Activated naive CD4-positive, alpha-beta T cell treated with anti-CD3 and anti-CD28 coated beads for 36 hours (primary cell): ENCODE measurements at regions of chr19 and their contacts with region 1.

Region 1: GRCh38 chr19:16197622-16198369 is at the start of gene AP1M1:
- DNase-seq: peak; percentile 99
- H3K4me3 Mint-ChIP-seq: peak within 1 kb of the TSS; percentile 93
- H3K27ac Mint-ChIP-seq: peak within 1 kb of the TSS; percentile 93
- H3K4me1 Mint-ChIP-seq: peaks cover 37% of the 10 kb centered on the region
- H3K27me3 Mint-ChIP-seq: no peaks in the 10 kb centered on the region
- total RNA-seq, gene AP1M1: 113 to 123 TPM

Region 2: DNA sequence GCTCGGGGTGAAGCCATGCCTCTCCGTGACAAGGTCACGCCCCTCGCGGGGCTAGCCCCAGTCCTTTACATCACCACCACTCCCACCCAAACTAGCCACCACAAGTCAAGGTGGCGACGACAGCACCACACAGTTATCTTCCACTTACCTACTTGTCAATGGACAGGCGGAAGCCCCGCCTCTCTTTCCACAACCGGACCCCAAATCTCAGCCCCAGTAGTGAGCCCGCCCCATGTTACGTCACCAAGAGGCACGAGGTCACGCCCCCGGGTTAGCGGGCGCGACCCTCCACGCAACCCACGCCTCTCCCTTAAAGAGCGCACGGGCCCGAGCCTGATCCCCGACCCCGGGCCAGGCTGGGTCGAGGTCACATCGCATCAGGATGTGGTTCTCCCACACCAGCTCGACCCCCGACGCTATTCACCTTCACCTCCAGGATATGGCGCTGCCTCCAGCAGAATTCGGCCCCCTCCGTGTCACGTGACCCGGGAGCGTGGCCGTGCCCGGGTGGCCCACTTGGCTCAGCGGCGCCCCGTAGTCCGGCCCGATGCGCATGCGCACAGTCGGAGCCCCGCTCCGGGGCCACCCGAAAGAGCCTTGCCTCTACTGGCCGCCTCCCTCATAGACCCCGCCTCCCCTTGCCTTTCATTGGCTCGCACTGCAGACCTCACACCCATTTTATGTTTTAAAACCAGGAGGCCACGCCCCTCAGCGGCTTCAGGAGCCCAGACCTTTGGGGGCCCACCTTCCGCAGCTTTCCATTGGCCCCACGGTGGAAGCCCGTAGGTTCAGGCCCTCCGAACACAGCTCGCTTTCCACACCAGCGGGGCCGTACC is 1072.3 kb before region 1 on chr19:
- CTCF ChIA-PET with region 1: no interaction called
- intact Hi-C with region 1: loop called (anchors 2 kb)
- DNase-seq: peak; percentile 99
- H3K4me3 Mint-ChIP-seq: peak overlapping the region; percentile 88
- H3K27ac Mint-ChIP-seq: peak overlapping the region; percentile 94
- H3K4me1 Mint-ChIP-seq: peaks cover 31% of the 10 kb centered on the region
- H3K27me3 Mint-ChIP-seq: no peaks in the 10 kb centered on the region

Region 3: DNA sequence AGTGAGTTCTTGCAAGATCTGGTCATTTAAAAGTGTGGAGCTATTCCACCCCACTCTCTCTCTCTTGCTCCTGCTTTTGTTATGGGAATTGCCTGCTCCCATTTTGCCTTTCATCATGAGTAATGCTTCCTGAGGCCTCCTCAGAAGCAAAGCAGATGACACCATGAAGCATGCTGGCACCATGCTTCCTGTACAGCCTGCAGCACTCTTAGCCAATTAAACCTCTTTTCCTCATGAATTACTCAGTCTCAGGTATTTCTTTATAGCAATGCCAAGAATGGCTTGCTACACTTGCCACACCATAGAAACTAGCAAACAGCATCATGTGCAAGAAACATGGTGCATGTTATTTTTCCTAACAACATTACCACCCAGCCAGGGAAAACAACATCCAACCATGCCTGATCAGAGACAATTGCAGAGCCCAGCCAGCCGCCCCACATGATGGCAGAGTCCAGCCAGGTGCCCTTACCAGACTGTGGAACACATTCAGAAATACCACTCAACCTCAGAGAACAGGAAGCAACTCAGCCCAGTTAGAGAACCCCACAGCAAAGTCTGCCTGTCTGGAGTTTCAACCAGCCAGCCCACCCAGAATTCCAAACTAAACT is 1053.7 kb before region 1 on chr19:
- CTCF ChIA-PET with region 1: no interaction called
- intact Hi-C with region 1: no loop called
- DNase-seq: no peak
- H3K4me3 Mint-ChIP-seq: no peak overlapping the region
- H3K27ac Mint-ChIP-seq: peak overlapping the region; percentile 4
- H3K4me1 Mint-ChIP-seq: peaks cover 7% of the 10 kb centered on the region
- H3K27me3 Mint-ChIP-seq: no peaks in the 10 kb centered on the region

Region 4: GRCh38 chr19:15935175-15935702 is 262.6 kb before region 1 on chr19:
- CTCF ChIA-PET with region 1: no interaction called
- intact Hi-C with region 1: no loop called
- DNase-seq: no peak
- H3K4me3 Mint-ChIP-seq: no peak overlapping the region
- H3K27ac Mint-ChIP-seq: no peak overlapping the region
- H3K4me1 Mint-ChIP-seq: no peaks in the 10 kb centered on the region
- H3K27me3 Mint-ChIP-seq: peaks cover 37% of the 10 kb centered on the region

Region 5: GRCh38 chr19:16160943-16161560 is 36.7 kb before region 1 on chr19:
- CTCF ChIA-PET with region 1: no interaction called
- intact Hi-C with region 1: no loop called
- DNase-seq: peak; percentile 52
- H3K4me3 Mint-ChIP-seq: no peak overlapping the region
- H3K27ac Mint-ChIP-seq: no peak overlapping the region
- H3K4me1 Mint-ChIP-seq: peaks cover 17% of the 10 kb centered on the region
- H3K27me3 Mint-ChIP-seq: no peaks in the 10 kb centered on the region

Region 6: DNA sequence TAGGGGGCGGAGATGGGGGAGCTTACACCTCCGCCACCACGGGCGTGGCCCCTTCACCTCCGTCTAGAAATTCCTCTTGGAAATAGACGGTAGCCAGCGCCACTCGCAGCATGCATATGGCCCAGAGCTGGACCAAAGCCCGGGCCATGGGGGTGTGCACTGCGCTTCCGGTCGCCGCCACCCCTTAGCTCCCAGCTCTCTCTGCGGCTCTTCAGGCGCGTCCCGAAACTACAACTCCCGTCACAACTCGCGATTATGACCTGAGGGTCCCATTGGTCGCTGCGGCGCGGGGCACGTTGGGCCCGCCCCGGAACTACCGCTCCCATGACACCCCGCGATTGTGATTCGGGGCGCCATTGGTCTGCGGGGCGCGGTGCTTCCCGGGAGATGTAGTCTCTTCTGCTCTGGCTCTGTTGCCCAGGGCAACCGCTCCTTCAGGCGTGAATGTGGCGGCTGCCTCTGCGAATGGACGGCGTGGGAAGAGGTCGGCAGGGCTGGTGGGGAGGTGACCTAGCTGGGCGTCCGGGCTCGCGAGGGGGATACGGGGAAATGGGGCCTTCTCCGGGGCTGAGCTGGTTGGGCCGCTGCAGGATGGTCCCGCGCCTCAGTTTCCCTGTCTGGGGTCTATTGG is 298.3 kb after region 1 on chr19 and contains the starts of genes C19orf44 and CALR3:
- CTCF ChIA-PET with region 1: no interaction called
- intact Hi-C with region 1: loop called (anchors 5 kb)
- DNase-seq: peak; percentile 98
- H3K4me3 Mint-ChIP-seq: peak within 1 kb of the TSS; percentile 95
- H3K27ac Mint-ChIP-seq: peak within 1 kb of the TSS; percentile 64
- H3K4me1 Mint-ChIP-seq: peaks cover 15% of the 10 kb centered on the region
- H3K27me3 Mint-ChIP-seq: no peaks in the 10 kb centered on the region
- total RNA-seq, gene C19orf44: 2.1 to 2.6 TPM
- total RNA-seq, gene CALR3: not detected